Right cardiac atrium (tissue), 5 donors: ENCODE measurements at regions of chr6 and their contacts with region 1.

Region 1: GRCh38 chr6:40328405-40328987 is 258.7 kb downstream of the LRFN2 start:
- DNase-seq: no peak
- ATAC-seq: peak in 1 of 2 donors; percentile 25
- H3K4me3 ChIP-seq: no peak overlapping the region
- H3K27ac ChIP-seq: no peak overlapping the region
- H3K4me1 ChIP-seq: no peaks in the 10 kb centered on the region
- H3K27me3 ChIP-seq: no peaks in the 10 kb centered on the region

Region 2: DNA sequence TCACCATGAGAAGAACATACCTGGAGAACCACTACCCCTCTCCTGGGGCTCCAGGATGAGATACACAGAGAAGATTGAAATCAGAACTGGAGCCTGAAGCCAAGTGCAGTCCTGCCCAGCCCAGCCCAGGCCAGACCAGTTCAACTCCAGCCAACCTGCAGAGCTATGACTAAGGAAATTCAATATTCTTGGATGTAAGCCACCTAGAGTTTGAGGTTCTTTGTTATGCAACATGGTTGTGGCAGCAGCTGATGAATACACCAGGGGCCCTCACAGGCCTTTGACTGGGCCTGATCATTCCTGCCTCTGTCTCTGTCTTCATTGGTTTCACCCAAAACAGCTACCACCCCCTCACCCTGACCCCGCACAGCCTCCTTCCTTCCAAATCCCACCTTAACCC is 90.9 kb after region 1 on chr6:
- intact Hi-C with region 1: loop called in 1 of 4 experiments (anchors 5 kb)
- DNase-seq: no peak
- ATAC-seq: no peak
- H3K4me3 ChIP-seq: no peak overlapping the region
- H3K27ac ChIP-seq: no peak overlapping the region
- H3K4me1 ChIP-seq: no peaks in the 10 kb centered on the region
- H3K27me3 ChIP-seq: no peaks in the 10 kb centered on the region

Region 3: DNA sequence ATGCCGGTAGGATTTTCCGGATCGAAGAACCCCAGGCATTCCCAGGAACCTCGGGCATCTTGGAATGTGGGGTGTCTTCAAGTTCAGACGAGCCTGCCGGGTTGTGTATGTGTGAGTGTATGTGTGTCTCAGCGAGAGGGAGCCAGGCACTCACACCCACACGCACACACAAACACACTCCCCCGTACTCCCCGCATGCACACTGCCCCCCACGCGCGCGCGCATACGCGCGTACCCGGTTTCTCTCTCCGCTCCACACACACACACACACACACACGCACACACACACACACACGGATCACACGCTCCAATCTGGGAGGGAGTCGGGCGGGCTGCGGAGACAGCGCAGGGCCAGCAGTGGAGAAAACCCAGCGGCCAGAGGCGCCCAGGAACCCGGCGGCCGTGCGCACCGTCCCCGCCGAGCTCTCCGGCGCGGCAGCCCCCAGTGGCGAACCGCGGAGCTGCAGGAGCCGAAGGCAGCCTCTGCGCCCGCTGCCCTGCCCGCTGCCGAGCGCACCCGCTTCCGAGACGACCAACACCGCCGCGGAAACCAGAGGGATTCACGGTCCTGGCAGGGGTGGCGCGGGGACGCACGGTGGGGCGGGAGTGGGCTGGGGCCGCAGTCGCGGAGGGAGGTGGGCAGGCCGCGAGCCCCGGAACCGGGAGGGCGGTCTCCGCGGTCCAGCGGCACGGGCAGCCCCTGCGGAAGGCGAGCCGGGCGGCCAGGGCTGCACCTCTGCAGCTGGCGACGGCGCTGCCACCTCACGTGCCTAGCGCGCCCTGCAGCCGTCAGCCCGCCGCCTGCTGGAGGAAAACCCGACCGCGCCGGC is 259.0 kb after region 1 on chr6 and contains the start of gene LRFN2:
- intact Hi-C with region 1: loop called in 1 of 4 experiments (anchors 10 kb)
- DNase-seq: peak; percentile 71 to 88 (median 88)
- ATAC-seq: peak; percentile 93 to 94
- H3K4me3 ChIP-seq: peak within 1 kb of the TSS; percentile 15
- H3K27ac ChIP-seq: no peak within 1 kb of the TSS
- H3K4me1 ChIP-seq: peaks cover 2% of the 10 kb centered on the region
- H3K27me3 ChIP-seq: no peaks in the 10 kb centered on the region
- total RNA-seq, gene LRFN2: not detected